Posterior vena cava (tissue), 2 donors: ENCODE measurements at regions of chr5 and their contacts with region 1.

Region 1: DNA sequence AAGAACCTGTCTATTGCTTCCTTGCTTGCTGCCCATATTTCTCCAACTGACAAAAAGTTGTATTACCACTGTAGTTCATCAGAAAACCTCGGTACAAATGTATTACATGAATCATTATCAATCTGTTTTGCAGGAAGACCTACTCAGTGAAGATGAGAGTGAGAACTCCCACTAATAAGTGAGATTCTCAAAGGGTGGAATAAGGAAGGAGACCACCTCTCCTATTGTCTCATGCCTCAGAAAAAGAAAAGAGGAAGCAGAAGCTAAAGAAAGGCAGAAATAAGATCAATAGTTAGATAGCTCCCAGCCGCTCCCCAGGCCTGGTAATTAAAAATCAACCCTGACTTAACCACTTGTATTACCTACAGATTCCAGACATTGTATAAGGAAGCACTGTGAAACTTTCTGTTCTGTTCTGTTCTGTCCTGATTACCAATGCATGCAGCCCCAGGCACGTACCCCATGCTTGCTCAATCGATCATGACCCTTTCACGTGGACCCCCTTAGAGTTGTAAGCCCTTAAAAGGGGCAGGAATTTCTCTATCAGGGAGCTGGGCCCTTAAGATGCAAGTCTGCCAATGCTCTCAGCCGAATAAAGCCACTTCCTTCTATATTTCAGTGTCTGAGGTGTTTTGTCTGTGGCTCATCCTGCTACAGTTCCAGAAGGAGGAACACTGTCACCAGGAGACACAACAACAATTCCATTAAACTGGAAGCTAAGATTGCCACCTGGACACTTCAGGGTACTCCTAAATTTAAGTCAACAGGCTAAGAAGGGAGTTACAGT is 152.5 kb upstream of the COX7C start:
- DNase-seq: no peak

Region 2: DNA sequence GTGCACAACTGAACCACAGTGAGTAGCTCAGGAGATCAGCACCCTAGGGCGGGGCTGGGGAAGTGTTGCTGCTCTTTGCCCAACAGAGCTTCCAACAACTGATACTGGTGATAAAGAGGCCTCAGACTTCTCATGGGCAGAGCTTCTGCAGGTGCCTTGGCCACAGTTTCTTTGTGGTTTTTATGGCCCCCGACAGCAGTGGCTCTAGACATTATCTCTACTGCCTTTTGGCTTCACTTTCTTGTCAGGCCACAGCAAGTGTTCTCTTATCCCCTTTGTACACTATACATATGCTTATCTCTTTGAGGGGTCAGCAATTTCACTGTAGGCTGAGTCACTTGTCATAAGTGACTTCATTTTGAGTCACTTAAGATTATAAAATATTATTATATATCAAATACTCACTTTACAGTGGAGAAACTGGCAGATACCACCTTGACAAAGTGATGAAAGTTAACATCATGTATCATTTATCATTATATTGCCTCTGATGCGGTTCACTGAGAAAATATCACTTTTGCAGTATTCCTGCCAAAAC is 61.6 kb after region 1 on chr5:
- intact Hi-C with region 1: loop called in 1 of 2 experiments (anchors 10 kb)
- DNase-seq: peak; percentile 67